Activated T-helper 1 cell treated with anti-CD3 and anti-CD28 coated beads, Interleukin-12 subunit alpha, Interleukin-12 subunit beta, Interleukin-2, Interleukin-4 antibody, amounts not matched to agents 30 ng/mL and 10 ng/mL and 1 ng/mL, durations not matched to agents 14 hours and 24 hours and 36 hours (primary cell): ENCODE measurements at regions of chr3 and their contacts with region 1.

Region 1: DNA sequence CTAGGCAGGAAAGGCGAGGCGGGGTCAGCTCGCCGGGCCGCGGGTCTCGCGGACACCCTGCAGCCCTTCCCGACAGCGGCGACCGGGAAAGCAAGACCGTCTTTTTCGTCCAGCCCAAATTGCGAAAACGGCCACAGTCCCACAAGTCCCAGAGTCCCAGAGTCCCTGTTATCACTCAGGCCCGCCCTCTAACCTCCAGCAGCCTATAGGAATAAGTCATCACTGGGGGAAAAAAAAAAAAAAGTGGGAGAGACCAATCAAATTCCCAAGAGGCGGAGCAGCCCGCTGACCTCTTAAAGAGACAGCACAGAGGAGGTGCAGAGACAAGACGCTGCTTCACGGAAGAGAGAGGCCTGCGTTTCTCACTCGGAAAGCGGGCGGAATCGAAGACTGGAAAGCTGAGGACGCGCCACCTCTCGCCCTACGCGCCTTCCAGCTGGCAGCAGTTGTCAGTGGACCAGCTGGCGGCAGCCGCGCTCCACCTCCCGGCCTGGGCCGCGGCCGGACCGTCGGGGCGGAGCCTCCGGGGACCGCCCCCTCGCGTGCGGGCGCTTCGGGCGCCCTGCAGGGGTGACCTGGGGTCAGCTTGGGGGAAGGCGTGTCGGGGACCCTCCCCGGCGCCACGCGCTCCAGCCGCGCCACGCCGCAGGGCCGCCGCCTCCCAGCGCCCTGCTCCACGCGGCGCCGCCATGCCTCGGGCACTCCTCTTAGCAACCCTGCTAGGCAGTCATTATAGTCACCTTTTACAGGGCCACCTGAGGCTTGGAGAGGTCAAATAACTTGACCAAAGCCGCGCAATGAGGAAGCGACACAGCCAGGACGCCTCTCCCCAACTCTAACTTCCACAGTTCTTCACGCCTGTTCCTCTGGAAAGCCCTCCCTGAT is at the start of gene TPRA1:
- DNase-seq: peak; percentile 81
- H3K4me3 Mint-ChIP-seq: peak within 1 kb of the TSS; percentile 91
- H3K27ac Mint-ChIP-seq: peak within 1 kb of the TSS; percentile 97
- H3K4me1 Mint-ChIP-seq: peaks cover 22% of the 10 kb centered on the region
- H3K27me3 Mint-ChIP-seq: no peaks in the 10 kb centered on the region
- total RNA-seq, gene TPRA1: 37.2 and 41.3 TPM in 2 replicates

Region 2: GRCh38 chr3:125594581-125595011 is 1996.2 kb before region 1 on chr3:
- intact Hi-C with region 1: loop called (anchors 5 kb)
- DNase-seq: peak; percentile 1
- H3K4me3 Mint-ChIP-seq: peak overlapping the region; percentile 95
- H3K27ac Mint-ChIP-seq: peak overlapping the region; percentile 88
- H3K4me1 Mint-ChIP-seq: peaks cover 28% of the 10 kb centered on the region
- H3K27me3 Mint-ChIP-seq: no peaks in the 10 kb centered on the region

Region 3: GRCh38 chr3:126475413-126476114 is 1115.3 kb before region 1 on chr3 and contains the start of gene ZXDC:
- intact Hi-C with region 1: loop called (anchors 2 kb)
- DNase-seq: peak; percentile 92
- H3K4me3 Mint-ChIP-seq: peak within 1 kb of the TSS; percentile 93
- H3K27ac Mint-ChIP-seq: peak within 1 kb of the TSS; percentile 88
- H3K4me1 Mint-ChIP-seq: peaks cover 28% of the 10 kb centered on the region
- H3K27me3 Mint-ChIP-seq: peaks cover under 1% of the 10 kb centered on the region
- total RNA-seq, gene ZXDC: 29.2 and 29.4 TPM in 2 replicates

Region 4: DNA sequence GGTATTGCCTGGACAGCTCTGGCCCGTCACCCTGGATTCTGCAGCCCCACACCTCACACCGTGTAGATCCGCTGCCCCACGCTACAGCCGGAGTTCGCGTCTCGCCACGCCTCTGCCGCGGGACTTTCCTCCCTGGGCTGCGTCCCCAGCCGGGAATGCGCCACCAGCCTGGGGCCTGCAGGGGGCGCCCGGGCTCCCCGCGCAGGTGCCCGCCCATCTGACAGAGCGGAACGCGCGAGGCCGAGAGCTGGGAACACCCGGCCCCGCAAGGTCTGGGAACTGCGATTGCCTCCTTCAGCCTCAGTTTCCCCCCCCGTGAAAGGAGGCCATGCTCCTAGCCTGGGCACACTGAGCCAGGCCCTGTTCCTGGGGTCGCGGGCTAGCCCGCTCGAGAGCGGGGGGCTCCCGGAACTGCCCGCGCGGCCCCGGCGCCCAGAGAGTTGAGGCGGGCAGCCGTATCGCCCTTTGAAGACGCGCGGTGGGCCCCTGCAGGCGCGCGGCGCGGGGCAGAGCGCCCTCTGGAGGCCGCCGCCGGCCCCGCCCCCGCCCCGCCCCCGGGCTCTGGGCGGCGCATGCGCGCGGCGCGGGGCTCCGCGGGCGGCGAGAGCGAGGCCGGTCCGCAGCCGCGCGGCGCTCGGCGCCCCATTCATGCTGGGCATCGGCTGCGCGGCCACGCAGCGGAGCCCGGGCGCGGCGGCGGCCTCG is 608.2 kb before region 1 on chr3 and contains the start of gene PLXNA1:
- intact Hi-C with region 1: loop called (anchors 2 kb)
- DNase-seq: peak; percentile 87
- H3K4me3 Mint-ChIP-seq: peak within 1 kb of the TSS; percentile 81
- H3K27ac Mint-ChIP-seq: peak within 1 kb of the TSS; percentile 90
- H3K4me1 Mint-ChIP-seq: peaks cover 23% of the 10 kb centered on the region
- H3K27me3 Mint-ChIP-seq: peaks cover 4% of the 10 kb centered on the region
- total RNA-seq, gene PLXNA1: 22.1 and 25.5 TPM in 2 replicates

Region 5: DNA sequence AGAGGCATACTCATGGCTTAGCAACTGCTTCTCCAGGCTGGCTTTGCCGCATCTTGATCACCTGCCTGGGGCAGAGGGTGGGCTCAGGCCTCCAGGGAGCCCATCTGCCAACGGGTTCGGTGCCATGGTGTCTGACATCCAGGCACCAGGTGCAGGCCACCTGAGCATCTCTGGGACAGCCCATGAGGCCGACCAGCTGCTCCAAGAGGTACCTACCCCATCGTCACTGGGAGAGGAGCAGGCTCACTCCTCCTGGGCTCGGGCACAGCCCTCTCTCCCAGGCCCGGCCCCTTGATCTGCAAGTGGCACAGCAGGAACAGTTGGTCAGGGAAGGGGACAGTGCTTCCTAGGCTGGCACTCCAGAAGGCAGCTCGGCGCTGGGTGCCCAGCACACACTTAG is 22.2 kb before region 1 on chr3:
- intact Hi-C with region 1: no loop called
- DNase-seq: no peak
- H3K4me3 Mint-ChIP-seq: no peak overlapping the region
- H3K27ac Mint-ChIP-seq: no peak overlapping the region
- H3K4me1 Mint-ChIP-seq: no peaks in the 10 kb centered on the region
- H3K27me3 Mint-ChIP-seq: peaks cover 4% of the 10 kb centered on the region

Region 6: GRCh38 chr3:127628788-127629466 is 38.1 kb after region 1 on chr3 and contains the start of gene PODXL2:
- intact Hi-C with region 1: loop called (anchors 2 kb)
- DNase-seq: peak; percentile 12
- H3K4me3 Mint-ChIP-seq: peak within 1 kb of the TSS; percentile 83
- H3K27ac Mint-ChIP-seq: peak within 1 kb of the TSS; percentile 62
- H3K4me1 Mint-ChIP-seq: peaks cover 16% of the 10 kb centered on the region
- H3K27me3 Mint-ChIP-seq: peaks cover 55% of the 10 kb centered on the region
- total RNA-seq, gene PODXL2: 9.7 and 10.3 TPM in 2 replicates

Region 7: DNA sequence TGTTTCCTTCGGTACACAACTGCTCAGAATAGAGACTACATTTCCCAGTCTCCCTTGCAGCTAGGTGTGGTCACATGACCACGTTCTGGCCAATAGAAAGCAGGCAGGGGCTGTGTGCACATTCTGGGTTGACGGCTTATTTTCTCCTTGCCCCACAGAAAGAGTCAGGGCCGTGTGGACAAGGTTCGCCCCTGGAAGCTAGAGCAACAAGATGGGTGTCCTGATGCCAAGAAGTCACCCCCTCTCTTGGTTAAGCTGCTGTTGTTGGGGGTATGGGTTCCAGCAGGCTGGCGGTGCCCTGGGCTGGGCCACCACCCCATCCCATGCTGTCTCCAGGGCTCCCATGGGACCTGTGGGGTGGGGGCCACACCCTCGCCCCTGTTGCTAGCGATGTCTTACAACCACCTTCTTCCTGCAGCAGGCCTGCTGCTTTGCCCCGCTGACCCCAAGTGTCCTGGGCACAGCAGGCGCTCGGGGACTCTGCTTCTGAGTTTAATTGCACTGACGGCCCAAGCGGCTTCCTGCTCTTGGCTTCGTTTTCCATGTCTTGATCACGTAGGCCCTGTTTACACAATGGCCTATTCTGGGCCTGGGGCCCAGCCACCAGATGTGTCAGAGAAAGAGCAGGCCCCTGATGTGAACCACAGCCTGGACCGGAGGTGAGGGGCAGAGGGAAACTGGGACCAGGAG is 106.9 kb after region 1 on chr3:
- intact Hi-C with region 1: loop called (anchors 1 kb)
- DNase-seq: peak; percentile 38
- H3K4me3 Mint-ChIP-seq: no peak overlapping the region
- H3K27ac Mint-ChIP-seq: no peak overlapping the region
- H3K4me1 Mint-ChIP-seq: no peaks in the 10 kb centered on the region
- H3K27me3 Mint-ChIP-seq: peaks cover 4% of the 10 kb centered on the region

Region 8: DNA sequence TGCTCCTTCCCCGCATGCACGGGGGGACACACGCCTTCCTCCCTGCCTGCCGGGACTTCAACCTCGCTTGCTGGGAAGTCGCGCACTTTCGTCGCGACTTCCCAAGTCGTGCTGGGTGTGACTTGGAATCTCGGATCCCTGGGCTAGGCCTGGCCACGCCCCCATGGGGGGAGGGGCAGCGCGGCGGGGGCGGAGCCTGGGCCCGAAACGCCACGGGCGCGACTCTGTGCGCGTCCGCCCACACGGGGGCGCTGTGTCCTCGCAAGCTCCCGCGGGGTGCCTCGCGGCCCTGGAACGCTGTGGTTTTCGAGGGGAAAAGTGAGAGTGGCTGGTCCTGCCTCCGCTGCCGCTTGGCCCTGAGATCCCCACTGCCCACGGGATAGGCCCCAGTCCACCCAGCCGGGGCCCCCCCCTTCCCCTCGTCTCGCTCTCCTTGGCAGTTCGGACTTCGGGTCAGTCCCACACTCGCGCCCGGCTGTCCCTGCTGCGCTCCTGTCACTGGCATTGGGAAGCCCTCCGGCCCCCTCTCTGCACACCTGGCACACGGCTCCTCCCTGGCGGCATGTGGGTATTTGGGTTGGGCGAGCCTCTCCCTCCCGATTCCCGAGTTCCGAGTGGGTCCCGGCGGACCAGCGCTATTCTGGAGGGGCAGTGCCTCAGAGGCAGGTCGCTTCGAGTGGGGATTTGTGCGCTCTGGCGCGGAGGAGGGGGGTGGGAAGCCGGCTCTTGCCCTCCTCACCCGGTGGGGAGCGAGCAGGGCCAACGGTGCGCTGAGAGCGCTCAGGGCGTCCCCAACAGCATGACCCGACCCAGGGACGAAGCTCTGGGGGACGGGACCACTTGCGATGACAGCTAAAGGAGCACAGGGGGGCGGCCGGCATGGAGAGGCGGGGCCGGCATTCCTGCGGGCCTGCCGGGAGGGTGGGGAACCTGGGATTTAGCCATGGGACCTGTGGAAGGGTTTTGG is 485.0 kb after region 1 on chr3:
- intact Hi-C with region 1: loop called (anchors 1 kb)
- DNase-seq: peak; percentile 76
- H3K4me3 Mint-ChIP-seq: peak overlapping the region; percentile 62
- H3K27ac Mint-ChIP-seq: no peak overlapping the region
- H3K4me1 Mint-ChIP-seq: peaks cover 7% of the 10 kb centered on the region
- H3K27me3 Mint-ChIP-seq: peaks cover 10% of the 10 kb centered on the region